Activated B cell treated with CpG ODN at 0.5 μM for 24 hours (primary cell): ENCODE measurements at regions of chr16 and their contacts with region 1.

Region 1: DNA sequence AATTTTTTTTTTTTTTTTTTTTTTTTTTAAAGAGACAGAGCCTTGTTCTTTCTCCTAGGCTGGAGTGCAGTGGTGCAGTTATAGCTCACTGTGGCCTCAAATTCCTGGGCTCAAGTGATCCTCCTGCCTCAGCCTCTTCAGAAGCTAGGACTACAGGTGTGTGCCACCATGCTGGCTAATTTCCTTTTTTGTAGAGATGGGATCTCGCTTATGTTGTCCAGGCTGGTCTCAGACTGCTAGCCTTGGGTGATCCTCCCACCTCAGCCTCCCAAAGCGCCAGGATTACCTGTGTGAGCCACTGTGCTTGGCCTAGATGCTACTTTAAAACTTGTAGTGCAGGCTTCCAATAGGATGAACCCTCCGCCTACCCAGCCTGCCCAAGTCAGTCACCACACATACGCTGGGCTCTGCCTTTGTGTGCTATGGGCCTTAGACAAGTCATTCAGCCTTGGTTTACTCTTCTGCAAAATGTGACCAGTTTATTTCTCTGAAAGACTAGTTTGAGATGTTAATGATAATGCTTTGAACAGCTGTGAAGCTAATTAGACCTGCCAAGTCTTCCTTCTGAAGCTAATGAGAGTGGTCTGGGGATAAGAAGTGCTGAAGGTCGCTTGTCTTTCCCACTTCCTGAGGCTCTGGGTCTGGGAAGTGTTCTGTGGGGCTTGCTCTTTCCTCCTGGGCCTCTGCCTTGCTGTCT is 5.2 kb downstream of the GPT2 start:
- DNase-seq: no peak
- ATAC-seq: no peak
- H3K4me3 Mint-ChIP-seq: no peak overlapping the region
- H3K27ac Mint-ChIP-seq: no peak overlapping the region
- H3K4me1 Mint-ChIP-seq: peaks cover 6% of the 10 kb centered on the region
- H3K27me3 Mint-ChIP-seq: peaks cover 2% of the 10 kb centered on the region
- CTCF ChIP-seq: no peak

Region 2: GRCh38 chr16:46903255-46903905 is 14.0 kb after region 1 on chr16:
- CTCF ChIA-PET with region 1: interaction called, 6 read pairs
- POLR2A ChIA-PET with region 1: interaction called, 10 read pairs
- intact Hi-C with region 1: no loop called
- DNase-seq: no peak
- ATAC-seq: no peak
- H3K4me3 Mint-ChIP-seq: no peak overlapping the region
- H3K27ac Mint-ChIP-seq: peak overlapping the region; percentile 41
- H3K4me1 Mint-ChIP-seq: peaks cover 6% of the 10 kb centered on the region
- H3K27me3 Mint-ChIP-seq: no peaks in the 10 kb centered on the region
- CTCF ChIP-seq: no peak

Region 3: GRCh38 chr16:47278306-47278970 is 389.0 kb after region 1 on chr16:
- CTCF ChIA-PET with region 1: no interaction called
- POLR2A ChIA-PET with region 1: no interaction called
- intact Hi-C with region 1: no loop called
- DNase-seq: no peak
- ATAC-seq: no peak
- H3K4me3 Mint-ChIP-seq: no peak overlapping the region
- H3K27ac Mint-ChIP-seq: no peak overlapping the region
- H3K4me1 Mint-ChIP-seq: no peaks in the 10 kb centered on the region
- H3K27me3 Mint-ChIP-seq: no peaks in the 10 kb centered on the region
- CTCF ChIP-seq: no peak